ENCODE measurements at regions of chr3 and their contacts with region 1.

Region 1: DNA sequence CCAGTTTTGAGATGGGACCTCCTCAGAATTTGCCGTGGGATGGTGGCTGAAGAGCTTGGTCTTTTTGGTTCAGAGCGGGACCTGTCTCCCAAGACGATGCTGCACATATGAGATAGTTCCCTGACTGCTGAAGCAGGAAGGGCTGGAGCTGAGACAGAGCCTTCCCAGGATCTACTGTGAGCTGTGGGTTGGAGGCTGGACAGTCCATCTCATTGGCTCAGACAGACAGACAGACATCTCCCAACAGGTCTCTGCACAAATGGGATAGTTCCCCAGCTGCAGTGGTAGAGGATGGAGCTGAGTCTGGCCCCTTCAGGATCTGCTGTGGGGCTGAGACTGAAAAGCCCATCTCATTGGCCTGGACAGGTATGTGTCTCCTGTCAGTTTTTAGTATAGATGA is 1145.6 kb upstream of the CADM2 start:
- DNase-seq: no peak
- H3K4me3 ChIP-seq: no peak overlapping the region
- H3K27ac ChIP-seq: no peak overlapping the region
- H3K4me1 ChIP-seq: no peaks in the 10 kb centered on the region
- H3K27me3 ChIP-seq: no peaks in the 10 kb centered on the region
- CTCF ChIP-seq: no peak
- EP300 ChIP-seq: no peak
- POLR2A ChIP-seq: no peak

Region 2: GRCh38 chr3:83800729-83801128 is 12.4 kb before region 1 on chr3:
- in situ Hi-C with region 1: no loop called
- intact Hi-C with region 1: loop called (anchors 2 kb)
- DNase-seq: no peak
- H3K4me3 ChIP-seq: no peak overlapping the region
- H3K27ac ChIP-seq: no peak overlapping the region
- H3K4me1 ChIP-seq: no peaks in the 10 kb centered on the region
- H3K27me3 ChIP-seq: no peaks in the 10 kb centered on the region
- CTCF ChIP-seq: no peak
- EP300 ChIP-seq: no peak
- POLR2A ChIP-seq: no peak

Region 3: GRCh38 chr3:83902842-83903533 is 89.8 kb after region 1 on chr3:
- in situ Hi-C with region 1: no loop called
- intact Hi-C with region 1: no loop called
- DNase-seq: no peak
- H3K4me3 ChIP-seq: no peak overlapping the region
- H3K27ac ChIP-seq: no peak overlapping the region
- H3K4me1 ChIP-seq: no peaks in the 10 kb centered on the region
- H3K27me3 ChIP-seq: no peaks in the 10 kb centered on the region
- CTCF ChIP-seq: no peak
- EP300 ChIP-seq: no peak
- POLR2A ChIP-seq: no peak